GM12878 (cell line): ENCODE measurements at regions of chr7 and their contacts with region 1.

Region 1: GRCh38 chr7:119996634-119997033 is 276.3 kb upstream of the KCND2 start:
- DNase-seq: no peak
- ATAC-seq: peak; percentile 44
- H3K4me3 ChIP-seq: no peak overlapping the region
- H3K27ac ChIP-seq: no peak overlapping the region
- H3K4me1 ChIP-seq: no peaks in the 10 kb centered on the region
- H3K27me3 ChIP-seq: no peaks in the 10 kb centered on the region
- CTCF ChIP-seq: no peak
- EP300 ChIP-seq: no peak
- POLR2A ChIP-seq: no peak
- RAD21 ChIP-seq: no peak

Region 2: DNA sequence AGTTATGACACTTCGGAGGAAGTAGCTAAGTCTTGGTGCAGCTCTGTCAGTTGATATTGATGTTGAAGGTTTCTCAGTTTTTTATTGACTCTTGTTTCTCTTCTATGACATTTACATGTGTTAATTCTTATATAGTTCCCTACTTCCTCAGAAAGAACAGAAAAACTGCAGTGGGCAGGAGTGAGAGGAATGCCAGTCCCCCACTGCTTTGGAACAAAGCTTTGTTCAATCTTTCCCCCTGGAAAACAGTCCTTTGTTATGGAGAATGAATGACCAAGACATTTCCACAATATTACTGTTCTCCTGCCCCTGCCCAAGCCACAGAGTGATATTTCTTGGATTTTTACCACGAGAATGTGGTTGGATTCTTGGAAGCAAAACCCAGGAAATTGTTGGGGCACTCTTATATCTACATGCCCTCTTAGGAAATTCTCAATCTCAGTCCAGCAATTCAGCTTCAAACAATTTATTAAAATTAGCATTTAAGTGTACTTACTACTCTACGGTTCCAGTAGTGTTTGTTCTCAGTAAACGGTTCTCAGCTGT is 18.4 kb after region 1 on chr7:
- CTCF ChIA-PET with region 1: no interaction called
- POLR2A ChIA-PET with region 1: no interaction called
- RAD21 ChIA-PET with region 1: no interaction called
- SMC1A ChIA-PET with region 1: no interaction called
- in situ Hi-C with region 1: no loop called
- intact Hi-C with region 1: no loop called
- DNase-seq: no peak
- ATAC-seq: no peak
- H3K4me3 ChIP-seq: no peak overlapping the region
- H3K27ac ChIP-seq: no peak overlapping the region
- H3K4me1 ChIP-seq: no peaks in the 10 kb centered on the region
- H3K27me3 ChIP-seq: no peaks in the 10 kb centered on the region
- CTCF ChIP-seq: no peak
- EP300 ChIP-seq: no peak
- POLR2A ChIP-seq: no peak
- RAD21 ChIP-seq: no peak

Region 3: DNA sequence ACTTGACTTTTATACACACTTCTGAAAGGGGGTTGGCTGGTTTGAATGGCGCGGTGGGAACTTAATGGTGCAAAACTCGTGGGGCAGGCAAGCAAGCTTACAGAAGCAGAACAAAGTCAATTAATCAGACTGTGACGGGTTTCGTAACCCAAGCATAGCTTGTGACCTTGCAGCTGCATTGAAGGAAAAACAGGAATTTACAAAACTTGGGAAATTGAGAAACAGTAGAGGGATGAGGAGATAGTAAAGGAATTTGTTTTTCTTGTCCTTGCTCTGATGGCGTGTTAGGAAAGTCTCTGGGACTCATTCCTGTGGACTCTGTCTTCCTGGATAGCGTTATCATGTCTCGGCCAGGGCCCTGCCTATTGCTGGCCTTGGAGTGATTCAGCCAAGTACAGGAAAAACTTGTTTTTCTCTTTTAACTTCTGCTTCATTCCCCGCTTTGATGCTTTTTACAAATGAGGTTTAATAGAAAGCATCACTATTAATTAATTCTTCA is 56.3 kb after region 1 on chr7:
- CTCF ChIA-PET with region 1: no interaction called
- POLR2A ChIA-PET with region 1: no interaction called
- RAD21 ChIA-PET with region 1: no interaction called
- SMC1A ChIA-PET with region 1: no interaction called
- in situ Hi-C with region 1: no loop called
- intact Hi-C with region 1: loop called (anchors 5 kb)
- DNase-seq: no peak
- ATAC-seq: no peak
- H3K4me3 ChIP-seq: no peak overlapping the region
- H3K27ac ChIP-seq: no peak overlapping the region
- H3K4me1 ChIP-seq: no peaks in the 10 kb centered on the region
- H3K27me3 ChIP-seq: no peaks in the 10 kb centered on the region
- CTCF ChIP-seq: no peak
- EP300 ChIP-seq: no peak
- POLR2A ChIP-seq: no peak
- RAD21 ChIP-seq: no peak

Region 4: DNA sequence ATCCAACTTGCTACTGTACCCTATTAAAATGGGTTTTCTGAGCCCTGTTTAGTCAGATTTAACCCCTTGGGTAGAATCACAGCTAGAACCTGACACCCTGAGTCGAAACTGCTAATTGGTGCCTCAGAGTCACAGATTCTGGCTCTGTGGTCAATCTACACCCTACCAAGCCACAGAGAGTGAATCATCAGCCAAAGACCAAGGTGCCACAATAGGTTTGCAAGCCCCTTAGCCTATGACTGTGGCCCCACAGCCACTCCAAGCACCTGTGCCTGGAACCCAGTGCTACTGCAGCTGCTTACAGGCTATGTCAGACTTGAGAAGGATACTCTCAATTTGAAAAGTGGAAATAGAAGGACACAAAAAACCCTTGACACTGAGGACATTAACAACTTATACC is 73.6 kb after region 1 on chr7:
- CTCF ChIA-PET with region 1: no interaction called
- POLR2A ChIA-PET with region 1: no interaction called
- RAD21 ChIA-PET with region 1: no interaction called
- SMC1A ChIA-PET with region 1: no interaction called
- in situ Hi-C with region 1: no loop called
- intact Hi-C with region 1: loop called (anchors 5 kb)
- DNase-seq: peak; percentile 17
- ATAC-seq: peak; percentile 90
- H3K4me3 ChIP-seq: no peak overlapping the region
- H3K27ac ChIP-seq: no peak overlapping the region
- H3K4me1 ChIP-seq: no peaks in the 10 kb centered on the region
- H3K27me3 ChIP-seq: no peaks in the 10 kb centered on the region
- CTCF ChIP-seq: no peak
- EP300 ChIP-seq: 0 out of 4 replicates have a peak, but pooled peaks of 1 of the 2 experiments have one; percentile 9
- POLR2A ChIP-seq: no peak
- RAD21 ChIP-seq: no peak